Right lobe of liver (tissue), 6 donors: ENCODE measurements at regions of chr16 and their contacts with region 1.

Region 1: GRCh38 chr16:61366006-61366405 is 670.2 kb downstream of the CDH8 start:
- DNase-seq: no peak
- ATAC-seq: no peak
- H3K4me3 ChIP-seq: no peak overlapping the region
- H3K27ac ChIP-seq: no peak overlapping the region
- H3K4me1 ChIP-seq: no peaks in the 10 kb centered on the region
- H3K27me3 ChIP-seq: no peaks in the 10 kb centered on the region
- CTCF ChIP-seq: no peak
- POLR2A ChIP-seq: no peak

Region 2: GRCh38 chr16:61313931-61314330 is 52.1 kb before region 1 on chr16:
- intact Hi-C with region 1: loop called in 1 of 2 experiments (anchors 10 kb)
- DNase-seq: no peak
- ATAC-seq: no peak
- H3K4me3 ChIP-seq: no peak overlapping the region
- H3K27ac ChIP-seq: no peak overlapping the region
- H3K4me1 ChIP-seq: no peaks in the 10 kb centered on the region
- H3K27me3 ChIP-seq: no peaks in the 10 kb centered on the region
- CTCF ChIP-seq: no peak
- POLR2A ChIP-seq: no peak